Activated T-helper 1 cell treated with anti-CD3 and anti-CD28 coated beads, Interleukin-12 subunit alpha, Interleukin-12 subunit beta, Interleukin-2, Interleukin-4 antibody, amounts not matched to agents 30 ng/mL and 10 ng/mL and 1 ng/mL, durations not matched to agents 14 hours and 24 hours and 36 hours (primary cell): ENCODE measurements at regions of chr4 and their contacts with region 1.

Region 1: GRCh38 chr4:122632396-122633143 is 11.7 kb upstream of the IL21 start:
- DNase-seq: no peak
- H3K4me3 Mint-ChIP-seq: no peak overlapping the region
- H3K27ac Mint-ChIP-seq: peak overlapping the region; percentile 75
- H3K4me1 Mint-ChIP-seq: peaks cover 35% of the 10 kb centered on the region
- H3K27me3 Mint-ChIP-seq: no peaks in the 10 kb centered on the region

Region 2: DNA sequence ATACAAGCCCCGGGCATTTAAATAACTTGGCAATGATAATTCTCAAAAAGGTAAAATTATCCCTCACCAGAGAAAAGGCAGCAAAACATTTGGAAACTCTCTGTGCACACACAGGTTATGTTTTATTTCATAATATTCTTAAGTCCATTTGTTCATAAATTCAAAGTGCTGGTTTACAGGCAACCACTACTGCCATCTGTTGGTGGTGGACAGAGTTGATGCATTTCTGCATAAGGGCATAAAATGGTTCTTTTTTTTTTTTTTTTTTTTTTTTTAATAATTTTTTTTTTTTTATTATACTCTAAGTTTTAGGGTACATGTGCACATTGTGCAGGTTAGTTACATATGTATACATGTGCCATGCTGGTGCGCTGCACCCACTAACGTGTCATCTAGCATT is 19.8 kb after region 1 on chr4:
- intact Hi-C with region 1: loop called (anchors 2 kb)
- DNase-seq: peak; percentile 38
- H3K4me3 Mint-ChIP-seq: no peak overlapping the region
- H3K27ac Mint-ChIP-seq: no peak overlapping the region
- H3K4me1 Mint-ChIP-seq: peaks cover 23% of the 10 kb centered on the region
- H3K27me3 Mint-ChIP-seq: no peaks in the 10 kb centered on the region

Region 3: GRCh38 chr4:122997463-122998101 is 365.0 kb after region 1 on chr4:
- intact Hi-C with region 1: loop called (anchors 10 kb)
- DNase-seq: no peak
- H3K4me3 Mint-ChIP-seq: no peak overlapping the region
- H3K27ac Mint-ChIP-seq: no peak overlapping the region
- H3K4me1 Mint-ChIP-seq: peaks cover 15% of the 10 kb centered on the region
- H3K27me3 Mint-ChIP-seq: no peaks in the 10 kb centered on the region

Region 4: DNA sequence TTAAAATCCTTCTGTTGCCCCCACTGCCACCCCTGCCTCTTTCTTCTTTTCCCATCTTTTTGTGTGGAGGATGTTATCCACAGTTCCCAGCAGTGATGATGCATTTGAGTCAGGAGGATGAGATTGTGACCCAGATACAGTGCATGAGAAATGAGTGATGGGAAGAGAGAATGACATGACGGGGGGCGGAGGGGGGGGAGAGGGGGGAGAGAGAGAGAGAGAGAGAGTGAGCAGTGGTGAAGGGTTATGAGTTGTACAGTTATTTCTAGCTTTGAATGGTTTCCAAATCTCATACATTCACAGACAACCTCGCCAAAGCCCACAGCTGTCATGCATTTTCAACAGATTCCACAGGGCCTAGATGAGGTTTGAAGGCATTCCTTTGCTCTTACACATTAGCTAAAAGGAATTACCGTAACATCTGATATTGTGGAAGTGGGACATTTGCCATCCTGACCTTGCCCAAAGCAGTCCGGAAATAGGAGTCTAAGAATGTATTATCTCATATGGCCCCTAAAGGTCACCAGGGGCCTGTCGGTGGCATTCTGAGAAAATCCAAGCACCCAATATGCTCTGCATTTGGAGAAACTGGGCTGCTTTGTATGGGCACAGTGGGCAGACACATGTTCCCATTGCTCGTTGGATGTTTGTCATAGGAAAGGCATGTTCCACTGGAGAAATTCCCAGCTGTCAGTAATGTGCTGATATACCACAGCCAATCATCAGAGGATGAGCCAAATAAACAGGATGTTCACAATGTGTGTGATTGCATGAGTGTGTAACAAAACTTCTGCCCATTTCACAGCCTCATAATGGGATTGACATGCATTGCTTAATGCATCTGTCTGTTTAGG is 1199.8 kb after region 1 on chr4:
- intact Hi-C with region 1: no loop called
- DNase-seq: no peak
- H3K4me3 Mint-ChIP-seq: no peak overlapping the region
- H3K27ac Mint-ChIP-seq: no peak overlapping the region
- H3K4me1 Mint-ChIP-seq: no peaks in the 10 kb centered on the region
- H3K27me3 Mint-ChIP-seq: no peaks in the 10 kb centered on the region